ENCODE measurements at regions of chr7 and their contacts with region 1.

Region 1: GRCh38 chr7:123569352-123570010 is 11.9 kb upstream of the NDUFA5 start:
- DNase-seq: no peak
- H3K4me3 ChIP-seq: no peak overlapping the region
- H3K27ac ChIP-seq: no peak overlapping the region
- H3K4me1 ChIP-seq: no peaks in the 10 kb centered on the region
- H3K27me3 ChIP-seq: no peaks in the 10 kb centered on the region
- CTCF ChIP-seq: no peak

Region 2: GRCh38 chr7:123624527-123625183 is 55.2 kb after region 1 on chr7:
- intact Hi-C with region 1: loop called (anchors 10 kb)
- DNase-seq: peak; percentile 39
- H3K4me3 ChIP-seq: no peak overlapping the region
- H3K27ac ChIP-seq: no peak overlapping the region
- H3K4me1 ChIP-seq: no peaks in the 10 kb centered on the region
- H3K27me3 ChIP-seq: no peaks in the 10 kb centered on the region
- CTCF ChIP-seq: peak; percentile 13

Region 3: GRCh38 chr7:125355899-125356298 is 1786.4 kb after region 1 on chr7:
- intact Hi-C with region 1: no loop called
- DNase-seq: no peak
- H3K4me3 ChIP-seq: no peak overlapping the region
- H3K27ac ChIP-seq: no peak overlapping the region
- H3K4me1 ChIP-seq: no peaks in the 10 kb centered on the region
- H3K27me3 ChIP-seq: no peaks in the 10 kb centered on the region
- CTCF ChIP-seq: no peak